Uterus (tissue), 4 donors: ENCODE measurements at regions of chr6 and their contacts with region 1.

Region 1: GRCh38 chr6:30769088-30769852 is 24.9 kb upstream of the IER3 start:
- DNase-seq: peak; percentile 83 to 88
- H3K4me3 ChIP-seq: no peak overlapping the region
- H3K27ac ChIP-seq: peak overlapping the region; percentile 88 to 89
- H3K4me1 ChIP-seq: peaks cover 3 to 11% of the 10 kb centered on the region in 2 donors
- H3K27me3 ChIP-seq: no peaks in the 10 kb centered on the region
- CTCF ChIP-seq: no peak
- POLR2A ChIP-seq: no peak

Region 2: DNA sequence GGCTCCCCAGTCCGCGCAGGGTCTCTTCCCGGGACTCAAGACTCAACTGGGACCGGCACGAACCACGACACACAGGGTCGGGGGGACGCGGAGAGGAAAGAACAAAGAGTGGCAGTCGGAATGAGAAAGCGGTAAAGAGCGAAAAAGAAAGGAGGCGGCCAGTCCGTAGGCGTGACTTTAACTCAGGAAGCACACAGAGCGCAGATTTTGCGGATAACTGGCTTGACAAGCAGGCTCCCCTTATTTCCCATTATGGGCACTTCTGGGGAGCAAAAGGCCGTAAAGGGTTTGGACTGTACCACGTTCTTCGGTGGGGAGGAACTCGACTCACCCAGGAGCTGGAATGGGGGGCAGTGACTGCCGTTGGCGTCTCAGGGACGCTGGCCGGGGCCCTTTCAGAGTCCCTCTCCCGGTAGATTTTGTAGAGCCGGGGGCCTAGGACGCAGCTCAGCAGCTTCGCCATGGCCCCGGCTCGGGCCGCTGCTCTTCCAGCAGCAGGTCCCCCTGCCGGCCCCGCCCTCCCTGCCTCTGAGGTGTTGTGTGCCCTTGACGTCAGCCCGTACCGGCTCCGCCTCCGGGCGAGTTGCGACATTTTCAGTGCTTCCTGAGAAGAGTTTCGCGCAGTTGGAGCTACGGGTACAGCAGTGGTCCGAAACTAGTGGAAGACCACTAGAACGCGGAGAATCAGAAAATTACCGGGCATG is 933.7 kb after region 1 on chr6 and contains the start of gene ABHD16A:
- intact Hi-C with region 1: loop called (anchors 5 kb)
- DNase-seq: peak; percentile 99
- H3K4me3 ChIP-seq: peak within 1 kb of the TSS; percentile 79 to 82
- H3K27ac ChIP-seq: peak within 1 kb of the TSS; percentile 96 to 98
- H3K4me1 ChIP-seq: peaks cover 7 to 9% of the 10 kb centered on the region in 2 donors
- H3K27me3 ChIP-seq: no peaks in the 10 kb centered on the region
- CTCF ChIP-seq: peak; percentile 6 to 24 (median 16)
- POLR2A ChIP-seq: peak; percentile 98 to 99
- total RNA-seq, gene ABHD16A: 25.9 to 50.9 (median 37.9) TPM